K562 (cell line): ENCODE measurements at regions of chrX and their contacts with region 1.

Region 1: DNA sequence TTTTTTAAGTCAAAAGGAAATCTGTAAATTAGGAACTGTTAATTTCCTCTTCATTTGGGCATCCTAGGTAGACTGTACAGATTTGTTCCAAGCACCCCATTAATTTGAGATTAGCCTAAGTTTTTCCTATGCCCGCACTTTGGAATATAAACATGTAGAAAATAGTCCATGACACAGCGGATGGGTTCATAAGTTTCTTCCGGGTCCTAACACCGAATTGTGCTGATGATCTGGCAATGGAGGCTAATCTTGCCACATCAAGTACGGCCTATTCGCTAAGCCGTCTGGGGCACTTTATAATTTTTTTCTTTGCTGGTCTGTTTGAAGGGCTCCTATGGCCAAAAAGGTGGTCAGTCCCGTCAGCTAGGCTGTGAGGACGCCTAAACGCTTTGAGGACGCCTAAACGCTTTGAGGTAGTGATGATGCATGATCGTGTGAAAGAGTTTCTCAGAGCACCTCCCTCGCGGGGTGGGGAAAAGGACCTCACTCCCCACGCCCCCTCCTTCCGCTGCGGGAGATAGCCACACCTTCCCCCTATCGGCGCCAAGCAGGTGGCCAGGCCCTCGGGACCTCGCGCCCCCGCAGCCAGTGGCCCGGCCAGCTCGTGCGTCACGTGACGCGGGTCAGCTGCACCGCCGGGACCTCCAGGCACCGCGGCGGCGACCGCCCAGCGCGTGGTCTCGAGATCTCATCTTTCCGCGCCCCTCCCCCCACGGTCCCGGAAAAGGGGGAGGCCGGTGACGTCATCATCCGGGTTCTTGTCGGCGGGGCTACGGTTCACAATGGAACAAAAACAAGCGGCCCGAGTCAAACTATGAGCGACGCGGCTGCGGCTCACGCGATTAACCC is 977 bp upstream of the USP9X start:
- DNase-seq: peak; percentile 85 to 97 (median 88)
- ATAC-seq: peak; percentile 69
- H3K4me3 ChIP-seq: peak overlapping the region; percentile 90
- H3K27ac ChIP-seq: peak overlapping the region; percentile 100
- H3K4me1 ChIP-seq: peaks cover 12 to 14% of the 10 kb centered on the region in 2 experiments; a peak in 4 of 5 replicates
- H3K27me3 ChIP-seq: no peaks in the 10 kb centered on the region
- CTCF ChIP-seq: no peak
- EP300 ChIP-seq: peak; percentile 85
- POLR2A ChIP-seq: peak; percentile 86
- RAD21 ChIP-seq: peak in 1 of 2 experiments; percentile 8; a peak in 1 of 4 replicates

Region 2: DNA sequence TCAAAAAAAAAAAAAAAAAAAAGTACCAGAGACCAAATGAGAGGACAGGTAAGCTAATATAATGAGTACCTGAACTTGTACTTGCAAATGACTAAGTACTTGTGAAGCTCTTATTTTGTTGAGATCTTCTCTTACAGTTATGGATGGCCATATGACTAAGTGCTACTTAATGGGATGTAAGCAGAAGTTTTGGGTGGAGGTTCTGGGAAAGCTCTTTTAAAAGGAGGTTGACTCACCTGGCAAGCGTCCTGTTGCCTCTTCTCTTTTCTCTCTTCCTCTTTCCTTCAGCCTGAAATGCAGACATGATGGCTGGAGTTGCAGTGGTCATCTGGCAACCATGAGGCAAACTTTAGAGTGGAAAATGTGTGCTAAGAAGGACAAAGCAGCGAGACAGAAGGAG is 312.0 kb before region 1 on chrX:
- CTCF ChIA-PET with region 1: no interaction called
- POLR2A ChIA-PET with region 1: no interaction called
- in situ Hi-C with region 1: no loop called
- intact Hi-C with region 1: no loop called
- DNase-seq: no peak
- ATAC-seq: no peak
- H3K4me3 ChIP-seq: no peak overlapping the region
- H3K27ac ChIP-seq: no peak overlapping the region
- H3K4me1 ChIP-seq: no peaks in the 10 kb centered on the region
- H3K27me3 ChIP-seq: no peaks in the 10 kb centered on the region
- CTCF ChIP-seq: no peak
- EP300 ChIP-seq: no peak
- POLR2A ChIP-seq: no peak
- RAD21 ChIP-seq: no peak

Region 3: DNA sequence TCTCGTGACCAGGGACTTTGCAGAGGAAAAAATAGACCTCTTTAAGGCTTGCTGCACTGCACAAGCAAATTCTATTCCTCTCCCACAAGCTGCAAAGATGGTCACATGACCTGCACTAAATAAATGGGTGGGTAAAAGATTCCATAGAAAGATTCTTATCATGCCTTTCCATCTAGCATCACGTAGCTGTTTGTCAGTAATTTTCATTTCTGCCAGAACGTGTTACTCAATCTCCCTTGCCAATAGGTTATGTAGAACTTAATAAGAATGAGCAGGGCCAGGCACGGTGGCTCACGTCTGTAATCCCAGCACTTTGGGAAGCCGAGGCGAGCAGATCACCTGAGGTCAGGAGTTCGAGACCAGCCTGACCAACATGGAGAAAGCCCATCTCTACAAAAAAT is 56.8 kb before region 1 on chrX:
- CTCF ChIA-PET with region 1: no interaction called
- POLR2A ChIA-PET with region 1: no interaction called
- in situ Hi-C with region 1: no loop called
- intact Hi-C with region 1: loop called (anchors 5 kb)
- DNase-seq: no peak
- ATAC-seq: no peak
- H3K4me3 ChIP-seq: no peak overlapping the region
- H3K27ac ChIP-seq: no peak overlapping the region
- H3K4me1 ChIP-seq: peaks cover 0 to 3% of the 10 kb centered on the region in 2 experiments; a peak in 2 of 5 replicates
- H3K27me3 ChIP-seq: no peaks in the 10 kb centered on the region
- CTCF ChIP-seq: no peak
- EP300 ChIP-seq: no peak
- POLR2A ChIP-seq: no peak
- RAD21 ChIP-seq: no peak

Region 4: DNA sequence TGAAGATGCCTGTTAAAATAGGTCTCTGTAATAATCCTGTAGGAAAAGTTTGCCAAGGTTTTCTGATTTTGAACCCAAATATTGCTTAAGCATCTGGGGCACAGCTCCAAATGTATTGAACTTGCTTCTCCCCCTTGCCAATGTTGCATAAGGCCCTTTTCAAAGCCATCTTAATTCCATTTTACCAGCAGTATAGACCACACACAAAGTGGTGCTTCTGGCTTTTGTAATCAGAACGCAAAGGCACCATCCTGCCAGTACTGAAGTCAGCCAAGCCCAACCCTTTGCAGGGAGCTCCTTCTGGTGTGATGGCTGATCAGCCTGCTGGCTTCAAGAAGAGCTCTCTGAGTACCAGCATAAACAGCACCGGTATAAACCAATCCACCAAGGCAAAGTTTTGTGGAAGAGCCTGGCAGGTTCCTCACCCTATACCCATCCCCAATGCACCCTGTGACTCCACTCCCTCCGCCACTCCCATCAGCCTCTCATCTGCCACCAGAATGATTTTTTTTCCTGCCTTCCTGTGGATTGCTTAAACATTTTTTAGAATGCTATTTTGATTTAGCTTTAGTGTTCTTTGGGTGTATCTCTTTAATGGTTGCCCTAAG is 38.2 kb before region 1 on chrX:
- CTCF ChIA-PET with region 1: no interaction called
- POLR2A ChIA-PET with region 1: interaction called, 3 read pairs
- in situ Hi-C with region 1: no loop called
- intact Hi-C with region 1: loop called (anchors 5 kb)
- DNase-seq: peak in 1 of 4 experiments; percentile 32
- ATAC-seq: peak; percentile 60
- H3K4me3 ChIP-seq: no peak overlapping the region
- H3K27ac ChIP-seq: peak overlapping the region; percentile 85; the same call in 2 of the 3 replicates
- H3K4me1 ChIP-seq: peaks cover 0 to 6% of the 10 kb centered on the region in 2 experiments; a peak in 3 of 5 replicates
- H3K27me3 ChIP-seq: no peaks in the 10 kb centered on the region
- CTCF ChIP-seq: no peak
- EP300 ChIP-seq: no peak
- POLR2A ChIP-seq: no peak
- RAD21 ChIP-seq: no peak